Right lobe of liver (tissue), 6 donors: ENCODE measurements at regions of chr11 and their contacts with region 1.

Region 1: DNA sequence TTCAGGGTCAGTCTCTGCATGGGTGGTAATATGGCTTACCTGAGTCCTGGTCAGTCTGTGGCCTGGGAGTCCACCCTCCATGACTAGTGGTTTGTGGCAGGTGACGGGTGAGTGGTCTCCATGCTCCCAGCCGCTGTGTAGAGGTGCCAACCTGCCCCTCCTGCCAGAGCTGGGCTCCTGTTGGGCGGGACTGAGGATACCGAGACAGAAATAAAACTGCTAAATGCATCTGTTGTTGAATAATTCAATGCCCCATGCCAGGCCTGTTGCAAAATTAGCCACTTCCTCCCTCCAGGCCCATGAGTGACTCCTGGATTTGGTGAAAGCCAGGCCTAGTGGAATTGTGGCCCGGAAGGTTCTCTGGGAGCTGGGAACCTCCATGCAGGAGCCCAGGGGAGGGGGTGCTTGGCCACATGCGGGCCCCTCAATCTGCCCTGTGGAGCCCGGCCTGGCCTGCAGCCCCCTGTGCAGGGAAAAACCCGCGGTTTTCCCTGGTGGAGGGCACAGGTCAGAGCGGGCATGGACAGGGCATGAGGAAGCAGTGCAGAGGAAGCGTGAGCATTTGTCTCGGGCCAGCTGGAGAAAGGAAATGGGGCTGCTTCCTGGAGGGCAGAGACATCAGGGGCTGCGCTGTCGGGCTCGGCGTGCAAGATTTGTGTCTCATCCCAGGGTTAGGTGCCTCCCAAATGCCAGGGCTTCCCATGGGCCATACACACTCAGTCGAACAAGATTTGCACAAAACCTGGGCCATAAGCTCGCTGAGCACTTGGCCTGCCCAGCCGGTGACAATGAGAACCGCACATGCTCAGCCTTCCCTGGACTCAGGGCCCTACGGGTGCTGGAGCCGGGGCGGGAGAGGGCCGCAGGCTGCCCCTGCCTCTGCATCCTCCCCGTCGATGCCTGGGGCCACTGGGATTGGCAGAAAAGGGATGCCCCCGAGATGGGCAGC is 66.9 kb downstream of the KCNQ1 start:
- DNase-seq: peak; percentile 17 to 39 (median 38)
- ATAC-seq: peak in 2 of 4 donors; percentile 14 to 37
- H3K4me3 ChIP-seq: no peak overlapping the region
- H3K27ac ChIP-seq: no peak overlapping the region
- H3K4me1 ChIP-seq: no peaks in the 10 kb centered on the region
- H3K27me3 ChIP-seq: no peaks in the 10 kb centered on the region
- CTCF ChIP-seq: no peak
- POLR2A ChIP-seq: no peak

Region 2: GRCh38 chr11:2444821-2445745 is 66.6 kb before region 1 on chr11 and contains the start of gene KCNQ1:
- intact Hi-C with region 1: loop called in 1 of 2 experiments (anchors 10 kb)
- DNase-seq: peak; percentile 54 to 67 (median 55)
- ATAC-seq: peak; percentile 69 to 82 (median 74)
- H3K4me3 ChIP-seq: peak within 1 kb of the TSS; percentile 14 to 49 (median 16)
- H3K27ac ChIP-seq: no peak within 1 kb of the TSS
- H3K4me1 ChIP-seq: no peaks in the 10 kb centered on the region
- H3K27me3 ChIP-seq: peaks cover 0 to 4% of the 10 kb centered on the region in 2 donors
- CTCF ChIP-seq: peak in 1 of 4 donors; percentile 16
- POLR2A ChIP-seq: peak; percentile 56
- total RNA-seq, gene KCNQ1: 0.61 to 2.4 (median 1.8) TPM

Region 3: GRCh38 chr11:2644844-2645778 is 133.4 kb after region 1 on chr11:
- intact Hi-C with region 1: no loop called
- DNase-seq: no peak
- ATAC-seq: no peak
- H3K4me3 ChIP-seq: no peak overlapping the region
- H3K27ac ChIP-seq: no peak overlapping the region
- H3K4me1 ChIP-seq: no peaks in the 10 kb centered on the region
- H3K27me3 ChIP-seq: no peaks in the 10 kb centered on the region
- CTCF ChIP-seq: no peak
- POLR2A ChIP-seq: no peak